Activated CD4-positive, alpha-beta memory T cell treated with anti-CD3 and anti-CD28 coated beads for 36 hours (primary cell): ENCODE measurements at regions of chr14 and their contacts with region 1.

Region 1: DNA sequence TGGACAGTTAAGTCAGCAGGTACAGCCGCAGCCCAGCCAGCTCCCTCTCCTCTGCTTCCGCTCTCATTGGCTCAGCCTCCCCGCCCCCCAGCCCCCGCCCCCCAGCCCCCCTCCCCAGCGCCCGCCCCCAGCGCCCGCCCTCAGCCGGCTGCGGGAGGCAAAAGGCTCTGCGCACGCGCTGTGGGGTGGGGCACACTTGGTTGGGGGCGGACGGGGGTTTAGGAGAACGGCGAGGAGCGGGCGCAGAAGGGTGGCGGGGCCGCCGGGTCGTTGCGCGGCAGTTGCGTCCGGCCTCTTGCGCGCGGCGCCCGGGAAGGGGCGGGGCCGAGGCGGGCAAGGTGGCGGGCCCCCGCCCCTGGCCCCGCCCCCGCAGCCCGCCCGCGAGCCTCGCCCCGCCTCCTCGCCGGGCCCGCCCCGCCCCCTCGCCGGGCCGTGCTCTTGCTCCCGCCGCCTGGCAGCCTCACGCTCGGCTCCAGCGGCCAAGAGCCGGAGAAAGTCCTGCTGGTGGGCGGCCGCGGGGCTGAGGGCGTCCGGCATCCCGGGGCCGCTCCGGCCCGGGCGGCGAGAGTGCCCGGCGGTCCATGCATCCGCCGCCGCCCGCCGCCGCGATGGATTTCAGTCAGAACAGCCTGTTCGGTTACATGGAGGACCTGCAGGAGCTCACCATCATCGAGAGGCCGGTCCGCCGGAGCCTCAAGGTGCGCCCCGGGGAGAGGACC is at the start of gene PPP4R4:
- DNase-seq: peak; percentile 95
- H3K4me3 Mint-ChIP-seq: peak within 1 kb of the TSS; percentile 79
- H3K27ac Mint-ChIP-seq: peak within 1 kb of the TSS; percentile 73
- H3K4me1 Mint-ChIP-seq: peaks cover 39% of the 10 kb centered on the region
- H3K27me3 Mint-ChIP-seq: no peaks in the 10 kb centered on the region
- total RNA-seq, gene PPP4R4: 17.0 to 19.2 TPM

Region 2: DNA sequence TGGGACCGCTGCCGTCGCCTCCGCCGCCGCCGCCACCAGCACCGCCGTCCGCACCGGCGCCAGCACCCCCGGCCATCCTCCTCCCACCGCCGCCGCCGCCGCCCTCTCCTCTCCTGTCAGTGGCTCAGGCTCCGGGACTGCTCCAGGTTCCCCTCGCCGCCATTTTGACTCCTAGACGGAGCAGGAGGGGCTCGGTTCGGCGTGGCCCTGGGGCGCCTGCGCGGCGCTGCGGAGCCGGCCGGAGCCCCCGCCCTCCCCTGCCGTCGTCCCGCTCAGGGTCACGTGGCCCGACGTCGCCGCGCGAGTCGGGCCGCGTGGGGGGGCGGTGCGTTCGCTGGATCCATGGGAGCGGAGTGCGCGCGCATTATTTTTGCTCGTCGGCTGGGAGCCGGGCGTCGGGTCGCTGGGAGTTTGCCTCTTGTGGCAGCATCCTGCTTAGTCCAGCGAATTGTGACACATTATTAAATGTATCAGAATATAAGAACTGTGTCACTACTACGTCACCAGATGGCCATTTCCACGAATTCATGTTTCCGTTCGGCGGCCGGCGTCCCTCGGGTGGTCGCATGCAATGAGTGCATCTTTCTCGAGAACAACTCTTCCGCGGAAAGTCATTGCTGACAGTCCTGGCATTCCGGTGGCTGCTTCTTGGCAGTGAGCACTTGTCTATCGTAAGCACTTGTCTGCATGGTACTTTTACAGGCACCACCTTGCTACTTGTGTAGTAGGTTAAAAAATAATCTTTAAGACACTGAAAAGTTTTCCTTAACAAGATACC is 841.0 kb before region 1 on chr14 and contains the start of gene BTBD7:
- CTCF ChIA-PET with region 1: no interaction called
- POLR2A ChIA-PET with region 1: no interaction called
- intact Hi-C with region 1: loop called (anchors 10 kb)
- DNase-seq: peak; percentile 96
- H3K4me3 Mint-ChIP-seq: peak within 1 kb of the TSS; percentile 83
- H3K27ac Mint-ChIP-seq: peak within 1 kb of the TSS; percentile 83
- H3K4me1 Mint-ChIP-seq: peaks cover 43% of the 10 kb centered on the region
- H3K27me3 Mint-ChIP-seq: no peaks in the 10 kb centered on the region
- total RNA-seq, gene BTBD7: 7.7 to 9.9 TPM

Region 3: DNA sequence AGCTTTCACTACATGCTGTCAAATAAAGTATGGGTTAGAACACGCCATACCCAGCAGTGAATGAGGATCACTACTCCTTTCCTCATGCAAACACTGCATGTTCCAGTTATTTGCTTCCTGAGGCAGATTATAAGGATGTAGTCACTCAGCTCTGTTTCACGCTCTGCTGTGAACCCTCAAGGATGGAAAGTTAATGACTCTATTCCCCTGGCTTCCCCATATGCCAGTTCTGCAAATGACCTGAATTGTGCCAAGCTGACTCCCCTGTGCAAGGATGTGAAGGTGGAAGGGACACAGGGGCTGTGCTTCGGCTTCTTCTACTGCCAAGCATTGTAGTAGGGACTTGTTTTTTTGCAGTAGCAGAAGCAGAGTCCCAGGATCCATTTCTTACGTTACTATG is 86.2 kb before region 1 on chr14:
- CTCF ChIA-PET with region 1: no interaction called
- POLR2A ChIA-PET with region 1: no interaction called
- intact Hi-C with region 1: no loop called
- DNase-seq: no peak
- H3K4me3 Mint-ChIP-seq: no peak overlapping the region
- H3K27ac Mint-ChIP-seq: no peak overlapping the region
- H3K4me1 Mint-ChIP-seq: peaks cover 5% of the 10 kb centered on the region
- H3K27me3 Mint-ChIP-seq: no peaks in the 10 kb centered on the region

Region 4: DNA sequence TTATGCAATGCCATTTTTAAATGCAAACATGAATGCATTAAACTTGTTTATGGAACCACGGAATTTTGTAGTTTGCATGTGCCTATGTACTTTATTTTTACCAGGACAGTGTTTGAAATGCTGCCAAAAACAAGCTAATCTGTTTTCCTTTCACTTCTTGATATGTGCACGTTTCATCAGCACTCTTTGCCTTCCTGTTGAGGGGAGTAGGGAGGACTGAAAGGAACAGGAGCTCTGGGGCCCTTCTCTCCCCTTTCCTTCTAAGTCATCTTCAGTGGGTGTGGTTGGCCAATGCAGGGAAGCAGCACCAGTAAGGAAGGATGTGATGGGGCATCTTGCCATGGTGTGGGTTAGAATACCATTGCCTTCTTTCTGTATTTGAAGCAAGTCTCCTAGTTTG is 12.1 kb before region 1 on chr14:
- CTCF ChIA-PET with region 1: interaction called, 4 read pairs
- POLR2A ChIA-PET with region 1: interaction called, 8 read pairs
- intact Hi-C with region 1: loop called (anchors 1 kb)
- DNase-seq: peak; percentile 32
- H3K4me3 Mint-ChIP-seq: no peak overlapping the region
- H3K27ac Mint-ChIP-seq: peak overlapping the region; percentile 55
- H3K4me1 Mint-ChIP-seq: peaks cover 81% of the 10 kb centered on the region
- H3K27me3 Mint-ChIP-seq: no peaks in the 10 kb centered on the region

Region 5: DNA sequence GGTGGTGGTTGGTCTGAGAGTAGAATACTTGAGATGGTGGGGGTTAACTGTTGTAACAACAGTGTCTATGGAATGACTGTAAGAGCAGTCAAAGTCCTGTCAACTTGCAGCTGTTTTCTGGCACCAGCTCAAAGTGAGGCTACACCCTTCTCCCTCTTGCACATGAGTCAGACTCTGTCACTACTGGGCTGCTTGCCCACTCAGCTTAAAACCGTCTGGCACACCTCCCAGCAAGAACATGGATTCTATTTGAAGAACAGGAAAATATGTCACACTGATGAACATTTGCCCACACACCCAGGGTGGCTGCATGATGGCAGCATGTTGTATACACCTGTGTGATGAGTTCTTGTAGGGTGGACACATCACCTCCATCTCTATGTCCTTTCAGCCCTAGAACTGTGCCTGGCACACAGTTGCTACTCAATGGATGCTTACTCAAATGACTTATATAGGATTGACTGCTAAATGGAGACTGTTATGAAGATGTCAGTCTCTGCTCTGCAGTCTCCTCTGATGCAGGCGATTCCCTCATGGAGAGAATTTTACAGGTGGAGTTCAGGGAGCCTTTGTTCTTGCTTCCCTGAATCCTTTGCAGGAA is 168.4 kb after region 1 on chr14:
- CTCF ChIA-PET with region 1: no interaction called
- POLR2A ChIA-PET with region 1: no interaction called
- intact Hi-C with region 1: loop called (anchors 1 kb)
- DNase-seq: peak; percentile 80
- H3K4me3 Mint-ChIP-seq: no peak overlapping the region
- H3K27ac Mint-ChIP-seq: peak overlapping the region; percentile 80
- H3K4me1 Mint-ChIP-seq: peaks cover 78% of the 10 kb centered on the region
- H3K27me3 Mint-ChIP-seq: no peaks in the 10 kb centered on the region

Region 6: GRCh38 chr14:94392510-94392935 is 218.5 kb after region 1 on chr14:
- CTCF ChIA-PET with region 1: no interaction called
- POLR2A ChIA-PET with region 1: interaction called, 3 read pairs
- intact Hi-C with region 1: loop called (anchors 5 kb)
- DNase-seq: peak; percentile 82
- H3K4me3 Mint-ChIP-seq: no peak overlapping the region
- H3K27ac Mint-ChIP-seq: peak overlapping the region; percentile 86
- H3K4me1 Mint-ChIP-seq: peaks cover 51% of the 10 kb centered on the region
- H3K27me3 Mint-ChIP-seq: peaks cover 2% of the 10 kb centered on the region

Region 7: DNA sequence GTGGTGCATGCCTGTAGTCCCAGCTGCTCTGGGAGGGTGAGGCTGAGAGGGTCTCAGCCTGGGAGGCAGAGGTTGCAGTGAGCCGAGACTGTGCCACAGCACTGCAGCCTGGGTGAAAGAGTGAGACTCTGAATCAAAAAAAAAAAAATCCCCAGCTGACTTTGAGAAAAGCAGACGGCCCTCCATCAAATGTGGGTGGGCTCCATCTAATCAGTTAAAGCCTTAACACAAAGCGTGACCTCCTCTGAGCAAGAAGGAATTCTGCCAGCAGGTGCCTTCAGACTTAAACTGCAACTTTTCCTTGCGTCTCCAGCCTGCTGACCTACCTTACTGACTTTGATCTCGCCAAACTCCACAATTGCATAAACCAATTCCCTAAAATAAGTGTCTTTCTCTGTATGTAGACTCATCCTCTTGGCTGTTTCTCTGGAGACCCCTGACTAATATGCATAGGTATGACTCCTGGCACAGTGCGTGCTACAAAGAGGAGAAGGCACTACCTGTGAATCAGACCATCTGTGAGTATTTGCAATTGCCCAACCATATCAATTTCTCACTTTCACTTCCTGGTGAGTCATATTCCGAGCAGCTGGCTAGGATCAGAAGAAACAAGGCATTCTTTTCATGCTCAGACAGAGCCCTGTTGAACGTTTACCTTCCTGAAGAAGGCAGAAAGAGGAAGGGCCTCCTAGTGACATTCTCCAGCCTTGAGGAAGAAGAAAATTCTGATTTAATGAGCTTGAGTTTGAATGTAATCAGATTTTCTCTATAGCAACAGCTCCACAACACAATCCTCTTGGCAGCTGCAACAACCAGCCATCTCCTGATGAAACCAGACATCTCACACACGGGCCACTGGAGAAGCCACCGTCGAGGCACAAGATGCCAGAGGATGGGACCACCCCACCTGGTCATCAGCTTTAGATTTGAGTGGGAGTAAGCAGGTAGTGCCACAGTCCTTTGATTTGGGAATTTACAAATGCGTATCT is 1091.4 kb after region 1 on chr14:
- CTCF ChIA-PET with region 1: no interaction called
- POLR2A ChIA-PET with region 1: no interaction called
- intact Hi-C with region 1: loop called (anchors 10 kb)
- DNase-seq: peak; percentile 72
- H3K4me3 Mint-ChIP-seq: no peak overlapping the region
- H3K27ac Mint-ChIP-seq: no peak overlapping the region
- H3K4me1 Mint-ChIP-seq: peaks cover 46% of the 10 kb centered on the region
- H3K27me3 Mint-ChIP-seq: peaks cover 1% of the 10 kb centered on the region

Region 8: DNA sequence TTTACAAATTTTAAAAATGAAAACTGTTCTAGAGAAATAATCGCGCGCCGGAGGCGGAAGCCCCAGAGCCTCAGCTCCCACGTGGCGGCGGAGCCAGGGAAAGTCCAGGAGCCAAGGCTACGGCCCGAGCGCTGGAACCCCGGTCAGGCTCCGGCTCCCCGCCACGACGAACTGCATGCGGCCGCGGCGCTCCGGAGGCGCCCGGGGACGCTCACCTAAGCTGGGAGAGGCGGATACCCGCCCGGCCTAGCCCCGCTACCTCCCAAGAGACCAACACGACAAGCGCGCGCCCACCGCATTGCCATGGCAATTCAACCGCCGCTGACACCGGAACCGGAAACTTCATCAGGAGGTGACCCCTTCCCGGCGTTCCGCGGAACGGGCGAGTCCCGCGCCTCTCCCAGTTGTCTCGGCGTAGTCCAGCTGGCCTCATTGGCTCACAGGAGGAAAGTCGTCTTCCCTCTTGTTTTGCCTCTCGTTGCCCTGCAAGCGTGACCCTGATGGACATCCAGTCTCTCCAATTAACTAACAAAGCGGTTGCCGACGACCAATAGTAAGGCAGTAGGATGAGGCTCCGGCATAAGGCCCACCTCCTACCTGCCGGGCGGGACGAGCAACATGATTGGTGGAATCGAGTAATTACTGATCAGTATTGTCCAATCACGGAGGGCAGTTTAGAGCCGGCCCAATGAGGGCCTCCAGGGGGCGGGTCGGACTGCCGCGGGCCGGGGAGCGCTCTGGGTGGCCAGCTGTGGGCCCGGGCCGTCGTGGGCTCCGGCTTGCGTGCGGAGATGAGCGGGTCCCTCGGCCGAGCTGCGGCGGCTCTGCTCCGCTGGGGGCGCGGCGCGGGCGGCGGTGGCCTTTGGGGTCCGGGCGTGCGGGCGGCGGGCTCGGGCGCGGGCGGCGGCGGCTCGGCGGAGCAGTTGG is 1360.5 kb after region 1 on chr14 and contains the start of gene GLRX5:
- CTCF ChIA-PET with region 1: no interaction called
- POLR2A ChIA-PET with region 1: no interaction called
- intact Hi-C with region 1: loop called (anchors 10 kb)
- DNase-seq: peak; percentile 98
- H3K4me3 Mint-ChIP-seq: peak within 1 kb of the TSS; percentile 93
- H3K27ac Mint-ChIP-seq: peak within 1 kb of the TSS; percentile 93
- H3K4me1 Mint-ChIP-seq: peaks cover 52% of the 10 kb centered on the region
- H3K27me3 Mint-ChIP-seq: no peaks in the 10 kb centered on the region
- total RNA-seq, gene GLRX5: 31.8 to 32.2 TPM